PC-9 (cell line): ENCODE measurements at regions of chr2 and their contacts with region 1.

Region 1: GRCh38 chr2:2740238-2740775 is 409.2 kb upstream of the MYT1L start:
- DNase-seq: no peak
- H3K4me3 ChIP-seq: no peak overlapping the region
- H3K27ac ChIP-seq: no peak overlapping the region
- H3K4me1 ChIP-seq: no peaks in the 10 kb centered on the region
- H3K27me3 ChIP-seq: peaks cover 82% of the 10 kb centered on the region
- CTCF ChIP-seq: no peak

Region 2: DNA sequence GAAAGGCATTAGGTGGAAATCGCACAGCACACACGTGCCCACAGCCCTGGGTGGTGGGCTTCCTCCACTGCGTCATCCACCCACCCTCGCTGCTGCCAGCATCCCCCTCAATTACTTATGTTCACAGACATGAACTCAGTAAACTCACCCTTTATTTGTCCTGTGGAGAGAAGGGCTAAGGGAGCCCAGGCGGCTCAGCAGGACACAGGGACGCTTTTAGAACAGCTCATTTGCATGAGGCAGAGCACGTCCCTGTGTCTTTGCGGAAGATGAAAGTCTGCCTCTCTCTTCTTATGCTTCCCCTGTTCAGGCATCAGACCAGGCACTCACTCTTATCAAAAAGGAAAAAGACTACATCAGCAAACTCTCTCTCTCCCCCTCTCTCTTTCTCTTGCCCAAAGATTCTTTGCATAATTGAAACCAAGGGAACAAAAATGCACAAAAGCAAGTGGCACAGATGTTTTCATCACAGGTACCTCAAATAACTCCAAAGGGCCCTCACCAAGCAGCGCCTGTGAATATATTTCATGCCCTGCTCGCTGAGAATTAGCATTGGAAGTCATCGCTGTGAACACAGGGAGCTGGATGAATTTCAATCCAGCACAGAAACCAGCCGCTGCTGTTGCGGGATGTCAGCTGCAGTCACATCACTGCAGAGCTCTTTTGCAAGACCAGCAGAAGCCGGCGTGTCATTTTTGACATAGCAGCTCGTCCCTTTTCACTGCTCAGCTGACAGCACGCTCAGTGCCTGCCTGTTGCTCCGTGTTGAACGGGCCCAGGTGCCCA is 32.9 kb before region 1 on chr2:
- CTCF ChIA-PET with region 1: no interaction called
- POLR2A ChIA-PET with region 1: interaction called, 14 read pairs
- intact Hi-C with region 1: no loop called
- DNase-seq: no peak
- H3K4me3 ChIP-seq: no peak overlapping the region
- H3K27ac ChIP-seq: no peak overlapping the region
- H3K4me1 ChIP-seq: no peaks in the 10 kb centered on the region
- H3K27me3 ChIP-seq: peaks cover 100% of the 10 kb centered on the region
- CTCF ChIP-seq: no peak

Region 3: GRCh38 chr2:2763411-2764355 is 23.4 kb after region 1 on chr2:
- CTCF ChIA-PET with region 1: no interaction called
- POLR2A ChIA-PET with region 1: no interaction called
- intact Hi-C with region 1: no loop called
- DNase-seq: no peak
- H3K4me3 ChIP-seq: no peak overlapping the region
- H3K27ac ChIP-seq: no peak overlapping the region
- H3K4me1 ChIP-seq: no peaks in the 10 kb centered on the region
- H3K27me3 ChIP-seq: peaks cover 94% of the 10 kb centered on the region
- CTCF ChIP-seq: no peak